ENCODE measurements at regions of chrX and their contacts with region 1.

Region 1: GRCh38 chrX:19544693-19545305 is 29.5 kb upstream of the MAP3K15 start:
- DNase-seq: peak in 30 of 42 donors; percentile 16 to 79 (median 54)

Region 2: GRCh38 chrX:19225924-19226323 is 318.9 kb before region 1 on chrX:
- intact Hi-C with region 1: no loop called
- DNase-seq: peak in 17 of 42 donors; percentile 1 to 42 (median 11)

Region 3: GRCh38 chrX:19372170-19372546 is 172.6 kb before region 1 on chrX:
- intact Hi-C with region 1: loop called (anchors 10 kb)
- DNase-seq: peak; percentile 21 to 83 (median 64)

Measured in head of caudate nucleus (tissue), 42 donors.